Activated CD8-positive, alpha-beta T cell treated with anti-CD3 and anti-CD28 coated beads, Interleukin-2, amount 10 ng/mL, durations not matched to agents 7 days and 5 days (primary cell): ENCODE measurements at regions of chr12 and their contacts with region 1.

Region 1: GRCh38 chr12:29317556-29318363 is 63.2 kb downstream of the ERGIC2 start:
- DNase-seq: peak; percentile 69
- ATAC-seq: peak; percentile 100
- H3K4me3 Mint-ChIP-seq: no peak overlapping the region
- H3K27ac Mint-ChIP-seq: no peak overlapping the region
- H3K4me1 Mint-ChIP-seq: peaks cover 12% of the 10 kb centered on the region
- H3K27me3 Mint-ChIP-seq: no peaks in the 10 kb centered on the region

Region 2: GRCh38 chr12:29073628-29074239 is 244.0 kb before region 1 on chr12:
- CTCF ChIA-PET with region 1: interaction called, 55 read pairs
- POLR2A ChIA-PET with region 1: no interaction called
- DNase-seq: peak; percentile 31
- ATAC-seq: peak; percentile 55
- H3K4me3 Mint-ChIP-seq: no peak overlapping the region
- H3K27ac Mint-ChIP-seq: no peak overlapping the region
- H3K4me1 Mint-ChIP-seq: no peaks in the 10 kb centered on the region
- H3K27me3 Mint-ChIP-seq: peaks cover 20% of the 10 kb centered on the region

Region 3: GRCh38 chr12:29145372-29146170 is 172.2 kb before region 1 on chr12:
- CTCF ChIA-PET with region 1: no interaction called
- POLR2A ChIA-PET with region 1: no interaction called
- DNase-seq: no peak
- ATAC-seq: no peak
- H3K4me3 Mint-ChIP-seq: no peak overlapping the region
- H3K27ac Mint-ChIP-seq: no peak overlapping the region
- H3K4me1 Mint-ChIP-seq: peaks cover 18% of the 10 kb centered on the region
- H3K27me3 Mint-ChIP-seq: peaks cover 11% of the 10 kb centered on the region

Region 4: DNA sequence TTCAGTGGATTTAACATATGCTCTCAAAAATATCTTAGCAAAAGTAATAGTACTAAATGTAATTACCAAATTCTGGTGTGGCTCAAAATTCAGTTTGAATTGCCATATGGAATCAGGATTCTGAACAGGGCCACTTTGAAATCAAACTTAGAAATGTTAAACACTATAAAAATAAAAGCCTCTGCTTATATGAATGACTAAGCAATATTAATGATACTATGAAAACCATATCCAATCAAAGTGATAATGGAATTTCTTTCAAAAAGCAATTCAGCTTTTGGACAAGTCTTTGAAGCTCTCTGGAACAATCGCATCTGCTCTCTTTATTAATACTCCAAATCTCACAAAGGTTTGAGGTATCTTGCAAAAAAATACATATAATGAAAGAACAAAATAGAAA is 11.7 kb after region 1 on chr12:
- CTCF ChIA-PET with region 1: interaction called, 18 read pairs
- POLR2A ChIA-PET with region 1: no interaction called
- DNase-seq: no peak
- ATAC-seq: no peak
- H3K4me3 Mint-ChIP-seq: no peak overlapping the region
- H3K27ac Mint-ChIP-seq: no peak overlapping the region
- H3K4me1 Mint-ChIP-seq: no peaks in the 10 kb centered on the region
- H3K27me3 Mint-ChIP-seq: no peaks in the 10 kb centered on the region